ENCODE measurements at regions of chr16 and their contacts with region 1.

Region 1: DNA sequence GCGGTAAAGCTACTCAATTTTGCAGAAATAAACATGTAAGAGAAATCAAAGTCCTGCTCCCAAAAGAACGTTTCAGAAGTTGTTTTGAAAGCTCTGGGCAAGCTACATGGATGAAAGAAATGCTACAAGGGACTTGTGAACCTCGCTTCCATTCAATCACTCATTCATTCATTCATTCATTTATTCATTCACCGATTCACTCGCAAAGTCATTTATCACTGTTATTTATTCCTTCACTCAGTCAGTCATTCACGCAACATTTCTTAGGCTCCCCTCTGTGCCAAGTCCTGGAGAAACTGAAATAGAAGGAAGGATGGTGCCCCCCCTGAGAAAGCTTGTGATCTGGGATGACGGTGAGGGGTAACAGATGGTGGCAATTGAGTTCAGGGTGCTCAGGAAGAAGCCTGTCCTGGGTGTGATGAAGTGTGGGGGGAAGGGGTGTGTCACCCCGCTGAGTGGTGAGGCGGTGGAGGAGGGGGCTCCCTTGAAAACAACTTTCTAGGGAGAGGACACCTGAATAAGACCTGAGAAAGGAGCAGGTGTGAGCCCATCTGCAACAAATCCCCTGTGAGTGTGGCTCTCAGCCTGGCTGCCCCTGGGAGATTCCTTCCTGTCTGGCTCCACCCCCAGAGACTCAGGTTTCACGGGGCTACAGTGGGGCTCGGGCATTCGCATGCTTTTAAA is 36.3 kb upstream of the PRSS54 start:
- DNase-seq: no peak
- ATAC-seq: no peak
- H3K4me3 ChIP-seq: no peak overlapping the region
- H3K27ac ChIP-seq: no peak overlapping the region
- H3K4me1 ChIP-seq: no peaks in the 10 kb centered on the region
- H3K27me3 ChIP-seq: peaks cover 0 to 3% (median 0%) of the 10 kb centered on the region in 3 donors
- CTCF ChIP-seq: no peak
- POLR2A ChIP-seq: no peak

Region 2: GRCh38 chr16:58481931-58482330 is 150.8 kb after region 1 on chr16:
- in situ Hi-C with region 1: loop called in 3 of 4 experiments (anchors 5 kb)
- intact Hi-C with region 1: loop called (anchors 1 kb)
- DNase-seq: no peak
- ATAC-seq: no peak
- H3K4me3 ChIP-seq: no peak overlapping the region
- H3K27ac ChIP-seq: no peak overlapping the region
- H3K4me1 ChIP-seq: no peaks in the 10 kb centered on the region
- H3K27me3 ChIP-seq: no peaks in the 10 kb centered on the region
- CTCF ChIP-seq: no peak
- POLR2A ChIP-seq: no peak

Measured in gastrocnemius medialis (tissue), 4 donors.